Common myeloid progenitor, CD34-positive (primary cell): ENCODE measurements at regions of chr11 and their contacts with region 1.

Region 1: GRCh38 chr11:18765554-18765953 is 26.0 kb downstream of the PTPN5 start:
- DNase-seq: no peak
- H3K4me3 ChIP-seq: no peak overlapping the region
- H3K27ac ChIP-seq: no peak overlapping the region
- H3K4me1 ChIP-seq: peaks cover 0 to 2% (median 0%) of the 10 kb centered on the region in 4 experiments
- H3K27me3 ChIP-seq: peaks cover 0 to 4% (median 0%) of the 10 kb centered on the region in 5 experiments

Region 2: DNA sequence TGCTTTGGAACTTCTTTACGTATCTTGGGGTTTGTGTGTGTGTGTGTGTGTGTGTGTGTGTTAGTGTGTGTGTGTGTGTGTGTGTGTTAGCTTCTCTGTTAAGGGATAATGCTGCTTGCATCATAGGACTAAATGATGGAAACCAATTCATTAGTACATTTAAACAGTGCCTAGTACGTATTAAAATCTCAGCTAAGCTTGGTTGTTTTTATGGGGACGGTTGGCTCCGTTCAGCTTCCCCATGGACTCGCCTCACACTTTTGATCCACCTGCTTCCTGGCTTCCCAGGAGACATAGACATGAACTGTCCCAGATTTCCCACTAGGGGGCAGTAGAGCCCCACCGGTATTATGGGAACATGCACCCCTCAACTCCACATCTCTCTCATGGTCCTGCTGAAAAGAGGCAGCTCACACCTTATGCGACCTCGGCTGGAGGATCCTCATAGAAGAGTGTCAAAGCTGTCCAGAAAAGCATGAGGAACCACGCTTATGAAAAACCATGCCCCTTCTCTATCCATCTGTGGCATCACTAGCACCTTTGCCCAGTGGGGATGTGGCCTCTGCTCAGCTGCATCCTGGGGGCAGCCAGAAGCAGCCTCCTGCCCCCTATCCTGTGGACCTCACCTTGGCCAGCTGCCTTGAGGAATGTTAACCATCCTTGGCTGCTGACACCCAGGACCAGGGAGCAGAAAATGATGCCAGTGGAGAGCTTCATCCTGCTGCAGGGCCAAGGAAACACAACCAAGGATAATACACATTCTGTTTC is 650.0 kb before region 1 on chr11:
- CTCF ChIA-PET with region 1: interaction called, 19 read pairs
- POLR2A ChIA-PET with region 1: no interaction called
- DNase-seq: peak; percentile 73 to 81 (median 79)
- H3K4me3 ChIP-seq: no peak overlapping the region
- H3K27ac ChIP-seq: no peak overlapping the region
- H3K4me1 ChIP-seq: no peaks in the 10 kb centered on the region
- H3K27me3 ChIP-seq: peaks cover 2 to 18% (median 4%) of the 10 kb centered on the region in 5 experiments

Region 3: DNA sequence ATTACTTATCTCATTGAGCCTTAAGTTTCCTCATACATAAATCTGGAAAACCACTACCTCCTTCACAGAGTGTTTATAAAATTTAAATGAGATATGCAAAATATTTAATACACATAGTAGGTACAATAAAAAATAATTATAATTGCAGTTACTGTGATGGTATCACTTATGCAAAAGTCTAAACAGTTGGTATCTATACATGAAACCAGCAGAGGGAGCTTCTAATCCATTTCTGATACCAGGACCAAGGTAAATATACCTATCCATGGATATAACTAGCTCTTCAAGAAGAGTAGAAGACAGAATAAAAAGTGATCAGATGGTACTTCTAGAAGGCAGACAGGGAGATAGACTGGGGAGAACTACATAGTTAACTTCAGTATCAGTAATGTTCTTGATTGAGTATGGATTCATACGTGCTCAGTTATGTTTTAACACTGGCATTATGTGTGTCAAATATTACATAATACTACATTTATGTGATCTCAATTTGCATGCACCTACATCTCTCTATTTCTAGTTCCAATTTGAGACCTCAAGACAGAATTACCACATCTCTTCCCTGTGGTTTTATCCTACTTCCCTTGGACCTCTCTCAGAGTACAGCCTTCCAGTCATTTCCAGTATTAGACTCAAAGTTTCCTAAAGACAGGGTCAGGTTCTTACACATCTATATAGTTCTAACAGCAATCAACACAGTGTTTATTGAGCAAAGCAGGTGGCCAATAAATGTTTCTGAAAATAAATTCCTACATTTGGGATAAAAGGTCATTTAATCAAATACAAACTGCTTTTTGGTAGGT is 225.1 kb before region 1 on chr11:
- CTCF ChIA-PET with region 1: interaction called, 11 read pairs
- POLR2A ChIA-PET with region 1: no interaction called
- DNase-seq: peak; percentile 36 to 58 (median 52)
- H3K4me3 ChIP-seq: no peak overlapping the region
- H3K27ac ChIP-seq: no peak overlapping the region
- H3K4me1 ChIP-seq: no peaks in the 10 kb centered on the region
- H3K27me3 ChIP-seq: no peaks in the 10 kb centered on the region

Region 4: DNA sequence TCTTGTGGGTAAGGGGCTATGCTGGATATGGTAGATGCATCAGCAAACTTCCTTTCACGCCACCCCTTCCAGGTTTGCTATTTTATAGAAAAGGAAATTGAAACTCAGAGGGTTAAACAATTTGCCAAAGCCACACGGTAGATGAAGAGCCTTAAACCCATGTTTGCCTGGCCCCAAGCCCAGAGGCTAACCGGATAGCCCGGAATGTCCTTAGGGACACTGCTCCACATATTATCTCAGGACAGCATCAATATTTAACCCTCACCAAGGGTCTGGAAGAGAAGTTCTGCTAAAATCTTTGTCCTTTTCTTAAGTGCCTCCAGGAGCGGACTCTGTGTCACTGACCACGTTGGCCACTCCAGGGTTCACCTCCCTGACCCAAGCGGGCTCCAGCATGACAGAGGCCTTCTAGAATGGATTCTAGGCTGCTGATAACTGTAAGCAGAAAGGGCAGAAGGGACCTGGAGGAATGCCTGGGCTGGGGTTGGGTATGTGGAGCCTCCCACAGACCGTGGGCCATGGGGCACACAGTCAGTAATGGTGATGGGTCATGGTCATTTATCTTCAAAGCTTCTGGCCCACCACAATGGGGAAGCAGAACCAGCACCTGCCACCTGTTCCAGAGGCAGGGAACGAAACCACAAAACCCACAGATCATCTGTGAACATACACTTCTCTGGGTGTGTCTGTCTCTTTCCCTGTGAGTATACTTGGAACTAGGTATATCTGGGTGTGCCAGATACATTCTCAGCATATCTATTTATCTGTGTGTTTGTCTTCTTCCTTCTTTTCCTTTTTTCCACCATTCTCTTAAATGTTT is 72.4 kb before region 1 on chr11:
- CTCF ChIA-PET with region 1: no interaction called
- POLR2A ChIA-PET with region 1: no interaction called
- DNase-seq: peak in 2 of 3 donors; percentile 18 to 37
- H3K4me3 ChIP-seq: no peak overlapping the region
- H3K27ac ChIP-seq: no peak overlapping the region
- H3K4me1 ChIP-seq: peaks cover under 1 to 4% (median 3%) of the 10 kb centered on the region in 4 experiments
- H3K27me3 ChIP-seq: peaks cover 0 to 12% (median 0%) of the 10 kb centered on the region in 5 experiments

Region 5: GRCh38 chr11:18785411-18785810 is 19.9 kb after region 1 on chr11:
- CTCF ChIA-PET with region 1: no interaction called
- POLR2A ChIA-PET with region 1: no interaction called
- DNase-seq: no peak
- H3K4me3 ChIP-seq: no peak overlapping the region
- H3K27ac ChIP-seq: no peak overlapping the region
- H3K4me1 ChIP-seq: peaks cover 0 to 3% (median 1%) of the 10 kb centered on the region in 4 experiments
- H3K27me3 ChIP-seq: peaks cover 0 to 31% (median 10%) of the 10 kb centered on the region in 5 experiments

Region 6: GRCh38 chr11:19209617-19210370 is 444.2 kb after region 1 on chr11:
- CTCF ChIA-PET with region 1: no interaction called
- POLR2A ChIA-PET with region 1: no interaction called
- DNase-seq: no peak
- H3K4me3 ChIP-seq: no peak overlapping the region
- H3K27ac ChIP-seq: no peak overlapping the region
- H3K4me1 ChIP-seq: peaks cover 0 to 2% (median 0%) of the 10 kb centered on the region in 4 experiments
- H3K27me3 ChIP-seq: peaks cover 0 to 9% (median 0%) of the 10 kb centered on the region in 5 experiments